Mammary epithelial cell (primary cell): ENCODE measurements at regions of chr1 and their contacts with region 1.

Region 1: GRCh38 chr1:157000686-157001085 is 44.9 kb downstream of the ARHGEF11 start:
- DNase-seq: peak; percentile 37
- H3K4me3 ChIP-seq: no peak overlapping the region
- H3K27ac ChIP-seq: no peak overlapping the region
- H3K4me1 ChIP-seq: peaks cover 20% of the 10 kb centered on the region
- H3K27me3 ChIP-seq: no peaks in the 10 kb centered on the region
- CTCF ChIP-seq: no peak

Region 2: GRCh38 chr1:156959414-156959813 is 41.3 kb before region 1 on chr1:
- CTCF ChIA-PET with region 1: no interaction called
- dilution Hi-C with region 1: no loop called
- in situ Hi-C with region 1: loop called in 1 of 2 experiments (anchors 10 kb)
- intact Hi-C with region 1: no loop called
- DNase-seq: no peak
- H3K4me3 ChIP-seq: no peak overlapping the region
- H3K27ac ChIP-seq: no peak overlapping the region
- H3K4me1 ChIP-seq: no peaks in the 10 kb centered on the region
- H3K27me3 ChIP-seq: no peaks in the 10 kb centered on the region
- CTCF ChIP-seq: no peak

Region 3: GRCh38 chr1:157050836-157051235 is 50.1 kb after region 1 on chr1:
- CTCF ChIA-PET with region 1: no interaction called
- dilution Hi-C with region 1: no loop called
- in situ Hi-C with region 1: no loop called
- intact Hi-C with region 1: no loop called
- DNase-seq: no peak
- H3K4me3 ChIP-seq: no peak overlapping the region
- H3K27ac ChIP-seq: no peak overlapping the region
- H3K4me1 ChIP-seq: no peaks in the 10 kb centered on the region
- H3K27me3 ChIP-seq: peaks cover 2% of the 10 kb centered on the region
- CTCF ChIP-seq: no peak